ENCODE measurements at regions of chr11 and their contacts with region 1.

Region 1: GRCh38 chr11:33808228-33808828 is 34.0 kb upstream of the FBXO3 start:
- DNase-seq: peak; percentile 76 to 81
- ATAC-seq: peak; percentile 90 to 99
- H3K4me3 ChIP-seq: no peak overlapping the region
- H3K27ac ChIP-seq: no peak overlapping the region
- H3K4me1 ChIP-seq: no peaks in the 10 kb centered on the region
- CTCF ChIP-seq: peak; percentile 89
- EP300 ChIP-seq: no peak
- POLR2A ChIP-seq: no peak
- RAD21 ChIP-seq: peak; percentile 80 to 84

Region 2: DNA sequence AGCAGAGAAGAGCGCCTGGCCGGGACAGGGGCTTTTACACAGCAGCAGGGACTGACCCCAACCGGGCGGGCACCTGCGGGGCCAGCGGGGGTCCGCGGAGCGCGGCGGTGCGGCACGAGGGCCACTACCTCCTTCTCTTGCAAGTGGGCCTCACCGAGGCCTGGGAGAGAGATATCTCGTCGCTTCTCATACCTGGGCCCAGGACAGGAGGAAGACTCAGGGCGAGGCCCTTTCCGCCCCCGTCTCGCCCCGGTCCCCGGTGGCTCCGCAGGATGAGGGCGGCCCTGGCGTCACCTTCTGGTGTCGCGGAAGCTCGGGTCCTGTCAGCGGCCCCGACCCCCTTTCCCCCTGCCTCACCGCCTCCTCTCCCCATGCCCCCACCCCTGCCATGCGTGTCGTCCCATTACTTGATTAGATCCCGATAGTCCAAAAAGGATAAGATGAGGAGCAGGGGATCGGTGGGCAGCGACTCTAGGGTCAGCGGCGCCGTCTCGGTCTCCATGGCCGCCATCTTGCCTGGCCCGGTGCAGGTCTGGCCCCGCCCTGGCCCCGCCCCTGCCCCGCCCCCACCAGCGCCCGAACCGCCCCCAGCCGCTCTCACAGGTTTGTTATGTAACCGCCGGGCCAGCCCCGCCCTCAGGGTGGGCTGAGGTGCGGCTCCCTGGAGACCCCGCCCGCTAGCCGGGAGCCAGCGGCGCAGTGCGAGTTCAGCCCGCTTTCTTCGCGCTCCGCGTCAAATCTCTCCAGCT is 34.2 kb before region 1 on chr11 and contains the start of gene FBXO3:
- CTCF ChIA-PET with region 1: interaction called, 10 read pairs
- POLR2A ChIA-PET with region 1: no interaction called
- DNase-seq: peak; percentile 79 to 88
- ATAC-seq: peak; percentile 88 to 90
- H3K4me3 ChIP-seq: peak within 1 kb of the TSS; percentile 90
- H3K27ac ChIP-seq: peak within 1 kb of the TSS; percentile 83 to 90
- H3K4me1 ChIP-seq: peaks cover 33% of the 10 kb centered on the region
- CTCF ChIP-seq: no peak
- EP300 ChIP-seq: no peak
- POLR2A ChIP-seq: peak; percentile 80
- RAD21 ChIP-seq: no peak
- polyA plus RNA-seq, gene FBXO3: 38.1 and 42.6 TPM in 2 replicates

Region 3: DNA sequence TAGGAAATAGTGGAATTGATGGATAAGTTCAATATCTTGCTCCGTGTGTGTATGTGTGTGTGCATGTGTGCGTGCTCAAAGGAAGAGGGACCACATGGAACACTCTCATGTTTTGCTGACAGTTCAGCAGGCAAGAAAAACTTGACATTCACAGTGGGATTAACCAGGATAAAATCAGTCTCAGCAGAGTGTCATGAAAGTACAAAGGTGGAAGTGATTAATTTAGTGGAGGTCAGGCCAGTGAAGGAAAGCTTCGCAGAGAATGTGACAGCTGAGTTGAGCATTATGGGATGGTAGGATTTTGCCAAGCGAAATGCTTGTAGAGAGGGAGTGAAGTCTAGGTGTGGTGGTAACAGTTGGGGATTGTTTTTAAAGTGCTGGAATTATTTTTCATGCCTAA is 18.3 kb before region 1 on chr11:
- CTCF ChIA-PET with region 1: interaction called, 29 read pairs
- POLR2A ChIA-PET with region 1: no interaction called
- DNase-seq: no peak
- ATAC-seq: no peak
- H3K4me3 ChIP-seq: no peak overlapping the region
- H3K27ac ChIP-seq: no peak overlapping the region
- H3K4me1 ChIP-seq: no peaks in the 10 kb centered on the region
- CTCF ChIP-seq: no peak
- EP300 ChIP-seq: no peak
- POLR2A ChIP-seq: no peak
- RAD21 ChIP-seq: no peak

Region 4: GRCh38 chr11:33819278-33819677 is 10.9 kb after region 1 on chr11:
- CTCF ChIA-PET with region 1: interaction called, 239 read pairs
- POLR2A ChIA-PET with region 1: no interaction called
- DNase-seq: no peak
- ATAC-seq: no peak
- H3K4me3 ChIP-seq: no peak overlapping the region
- H3K27ac ChIP-seq: no peak overlapping the region
- H3K4me1 ChIP-seq: no peaks in the 10 kb centered on the region
- CTCF ChIP-seq: no peak
- EP300 ChIP-seq: no peak
- POLR2A ChIP-seq: no peak
- RAD21 ChIP-seq: no peak

Region 5: GRCh38 chr11:33959855-33960400 is 151.6 kb after region 1 on chr11:
- CTCF ChIA-PET with region 1: no interaction called
- POLR2A ChIA-PET with region 1: no interaction called
- DNase-seq: no peak
- ATAC-seq: no peak
- H3K4me3 ChIP-seq: no peak overlapping the region
- H3K27ac ChIP-seq: no peak overlapping the region
- H3K4me1 ChIP-seq: no peaks in the 10 kb centered on the region
- CTCF ChIP-seq: no peak
- EP300 ChIP-seq: no peak
- POLR2A ChIP-seq: no peak
- RAD21 ChIP-seq: no peak

Region 6: DNA sequence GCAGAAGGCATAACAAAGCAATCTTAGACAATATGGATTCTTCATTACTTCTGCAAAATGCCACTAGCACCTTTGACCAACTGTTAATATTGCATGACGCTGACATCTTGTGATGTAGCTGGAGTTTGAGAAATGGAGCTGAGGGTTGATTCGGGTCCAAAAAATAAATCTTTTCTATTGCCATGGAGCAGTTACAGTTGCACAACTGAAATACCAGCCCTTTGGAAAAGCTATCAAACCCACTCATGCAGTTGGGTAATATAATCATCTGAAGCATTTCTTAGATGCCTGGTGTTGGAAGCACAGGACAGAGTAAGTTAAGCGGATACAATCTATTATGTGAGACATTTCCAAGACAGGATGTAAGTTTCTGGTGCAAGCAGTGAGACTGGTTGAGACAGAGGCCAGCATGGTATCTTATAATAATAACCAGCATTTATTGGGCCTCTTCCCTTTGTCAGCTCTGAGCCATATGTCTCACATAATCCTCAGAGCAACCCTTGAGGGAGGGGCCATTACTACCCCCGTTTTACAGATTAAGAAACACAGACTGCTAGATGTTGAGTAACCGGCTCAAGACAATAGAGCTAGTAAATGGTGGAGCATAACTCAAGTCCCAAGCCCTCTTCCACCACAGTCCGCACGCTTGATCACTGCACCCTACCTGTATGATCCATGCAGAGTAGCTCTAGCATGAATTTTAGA is 168.3 kb after region 1 on chr11:
- CTCF ChIA-PET with region 1: interaction called, 29 read pairs
- POLR2A ChIA-PET with region 1: no interaction called
- DNase-seq: no peak
- ATAC-seq: no peak
- H3K4me3 ChIP-seq: no peak overlapping the region
- H3K27ac ChIP-seq: no peak overlapping the region
- H3K4me1 ChIP-seq: no peaks in the 10 kb centered on the region
- CTCF ChIP-seq: no peak
- EP300 ChIP-seq: no peak
- POLR2A ChIP-seq: no peak
- RAD21 ChIP-seq: no peak

Measured in A549 (cell line).